ENCODE measurements at regions of chr4 and their contacts with region 1.

Region 1: GRCh38 chr4:68180849-68181526 is 51.3 kb upstream of the TMPRSS11F start:
- DNase-seq: peak; percentile 79
- ATAC-seq: peak; percentile 63
- H3K4me3 ChIP-seq: no peak overlapping the region
- H3K27ac ChIP-seq: peak overlapping the region; percentile 57
- H3K4me1 ChIP-seq: peaks cover 24% of the 10 kb centered on the region
- H3K27me3 ChIP-seq: 0 out of 2 replicates have a peak, but pooled peaks cover 3% of the 10 kb centered on the region
- CTCF ChIP-seq: no peak

Region 2: DNA sequence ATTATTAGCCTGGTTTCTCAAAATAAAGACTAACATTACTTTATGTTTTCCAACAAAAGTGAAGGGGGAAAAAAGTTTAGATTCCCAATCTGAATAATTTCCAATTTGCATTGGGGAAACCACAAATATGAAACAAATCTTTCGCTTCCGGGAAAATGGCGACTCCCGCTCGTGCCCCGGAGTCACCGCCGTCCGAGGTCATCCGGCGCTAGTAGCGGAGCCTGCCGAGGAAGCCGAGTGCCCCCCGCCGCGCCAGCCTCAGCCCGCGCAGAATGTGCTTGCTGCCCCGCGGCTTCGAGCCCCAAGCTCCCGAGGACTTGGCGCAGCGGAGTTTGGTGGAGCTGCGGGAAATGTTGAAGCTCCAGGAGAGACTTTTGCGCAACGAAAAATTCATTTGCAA is 142.7 kb before region 1 on chr4:
- CTCF ChIA-PET with region 1: no interaction called
- POLR2A ChIA-PET with region 1: no interaction called
- intact Hi-C with region 1: no loop called
- DNase-seq: no peak
- ATAC-seq: no peak
- H3K4me3 ChIP-seq: no peak overlapping the region
- H3K27ac ChIP-seq: no peak overlapping the region
- H3K4me1 ChIP-seq: no peaks in the 10 kb centered on the region
- H3K27me3 ChIP-seq: peaks cover 14% of the 10 kb centered on the region
- CTCF ChIP-seq: no peak

Region 3: GRCh38 chr4:68209003-68209402 is 28.0 kb after region 1 on chr4:
- CTCF ChIA-PET with region 1: no interaction called
- POLR2A ChIA-PET with region 1: no interaction called
- intact Hi-C with region 1: loop called (anchors 1 kb)
- DNase-seq: no peak
- ATAC-seq: no peak
- H3K4me3 ChIP-seq: no peak overlapping the region
- H3K27ac ChIP-seq: no peak overlapping the region
- H3K4me1 ChIP-seq: no peaks in the 10 kb centered on the region
- H3K27me3 ChIP-seq: no peaks in the 10 kb centered on the region
- CTCF ChIP-seq: no peak

Region 4: GRCh38 chr4:68249434-68249833 is 68.4 kb after region 1 on chr4:
- CTCF ChIA-PET with region 1: no interaction called
- POLR2A ChIA-PET with region 1: no interaction called
- intact Hi-C with region 1: no loop called
- DNase-seq: no peak
- ATAC-seq: no peak
- H3K4me3 ChIP-seq: no peak overlapping the region
- H3K27ac ChIP-seq: no peak overlapping the region
- H3K4me1 ChIP-seq: no peaks in the 10 kb centered on the region
- H3K27me3 ChIP-seq: 0 out of 2 replicates have a peak, but pooled peaks cover 7% of the 10 kb centered on the region
- CTCF ChIP-seq: no peak